ENCODE measurements at regions of chr2 and their contacts with region 1.

Region 1: DNA sequence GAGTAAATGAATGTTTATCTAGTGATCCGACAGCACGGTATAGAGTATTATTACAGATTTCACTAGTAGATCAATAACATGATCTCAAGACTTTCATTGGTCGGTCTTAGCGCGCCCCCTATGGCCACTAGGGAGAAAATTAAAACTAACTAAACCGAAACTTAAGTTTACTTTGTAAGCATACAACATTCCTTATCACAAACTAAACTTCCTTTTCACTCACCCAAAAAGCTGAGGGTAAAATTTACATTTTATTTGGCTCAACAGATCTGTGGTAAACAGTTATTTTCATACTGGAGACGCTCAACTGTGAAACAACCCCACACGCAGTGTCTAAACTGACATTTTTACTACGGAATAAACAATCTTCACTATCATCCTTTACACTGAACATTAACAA is 215.6 kb upstream of the MAP2 start:
- DNase-seq: peak; percentile 51
- ATAC-seq: no peak
- H3K4me3 Mint-ChIP-seq: peak overlapping the region; percentile 2
- H3K27ac Mint-ChIP-seq: no peak overlapping the region
- H3K4me1 Mint-ChIP-seq: no peaks in the 10 kb centered on the region
- H3K27me3 Mint-ChIP-seq: no peaks in the 10 kb centered on the region
- CTCF ChIP-seq: peak; percentile 40

Region 2: GRCh38 chr2:208466151-208466919 is 741.9 kb before region 1 on chr2:
- CTCF ChIA-PET with region 1: no interaction called
- POLR2A ChIA-PET with region 1: no interaction called
- intact Hi-C with region 1: loop called (anchors 5 kb)
- DNase-seq: peak; percentile 8
- ATAC-seq: peak; percentile 49
- H3K4me3 Mint-ChIP-seq: no peak overlapping the region
- H3K27ac Mint-ChIP-seq: no peak overlapping the region
- H3K4me1 Mint-ChIP-seq: no peaks in the 10 kb centered on the region
- H3K27me3 Mint-ChIP-seq: no peaks in the 10 kb centered on the region
- CTCF ChIP-seq: peak; percentile 58